Right ventricle myocardium superior (tissue), 1 donor: ENCODE measurements at regions of chr6 and their contacts with region 1.

Region 1: DNA sequence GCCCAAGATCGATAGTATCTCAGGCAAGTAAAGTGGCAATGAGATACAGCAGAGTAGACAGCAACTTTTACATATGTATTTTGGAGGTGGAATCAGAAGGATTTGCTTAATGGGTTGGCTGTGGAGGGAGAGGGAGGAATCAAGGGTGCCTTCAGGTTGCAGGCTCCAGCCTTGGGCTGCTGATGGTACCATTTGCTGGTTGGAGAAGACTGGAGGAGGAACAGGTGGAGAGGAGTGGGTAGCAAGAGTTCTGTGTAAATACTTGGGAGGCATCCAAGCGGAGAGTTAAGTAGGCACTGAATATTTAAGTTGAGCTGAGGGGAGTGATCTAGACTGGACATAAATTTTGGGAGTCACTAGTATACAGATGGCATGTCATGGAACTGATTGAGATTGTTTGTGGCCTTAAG is 5.2 kb downstream of the BICRAL start:
- DNase-seq: no peak
- ATAC-seq: no peak

Region 2: DNA sequence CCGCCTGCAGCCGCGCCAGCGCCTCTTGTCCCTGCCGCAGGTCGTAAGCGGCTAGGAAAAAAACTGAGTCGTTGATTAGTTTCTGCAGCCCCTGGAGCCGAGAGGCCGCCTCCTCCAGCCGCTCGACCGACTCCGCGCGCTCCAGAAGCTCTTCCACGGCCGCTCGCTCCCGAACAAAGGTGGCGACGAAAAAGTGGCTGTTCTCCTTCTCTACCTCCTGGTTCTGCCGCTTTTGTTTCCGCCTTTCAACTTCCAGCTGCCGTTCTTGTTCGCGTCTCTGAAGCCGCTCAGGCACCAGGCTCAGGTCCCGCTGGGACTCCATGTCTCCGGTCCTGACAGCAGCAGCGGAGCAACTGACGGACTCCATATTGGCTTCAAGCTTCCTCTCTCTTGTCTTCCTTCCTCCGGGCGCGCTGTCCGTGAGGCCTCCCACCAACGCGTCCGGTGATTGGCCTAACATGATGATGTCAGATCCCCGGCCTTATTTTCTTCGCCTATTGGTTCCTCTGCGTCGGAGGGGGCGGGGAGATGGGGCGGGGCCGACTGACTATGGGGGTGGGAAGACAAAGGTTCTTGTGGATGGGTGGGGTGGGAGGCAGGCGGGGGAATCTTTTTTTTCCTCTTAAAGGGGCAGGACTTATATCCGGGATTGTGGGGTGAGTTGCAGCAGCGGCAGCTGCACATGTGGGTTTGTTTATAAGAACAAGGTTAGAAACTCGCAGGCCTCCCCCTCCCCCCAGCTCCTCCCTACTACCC is 41.2 kb before region 1 on chr6 and contains the start of gene TBCC:
- intact Hi-C with region 1: loop called (anchors 2 kb)
- DNase-seq: peak; percentile 96
- ATAC-seq: peak; percentile 94
- total RNA-seq, gene TBCC: 10.2 TPM